ENCODE measurements at regions of chr6 and their contacts with region 1.

Region 1: DNA sequence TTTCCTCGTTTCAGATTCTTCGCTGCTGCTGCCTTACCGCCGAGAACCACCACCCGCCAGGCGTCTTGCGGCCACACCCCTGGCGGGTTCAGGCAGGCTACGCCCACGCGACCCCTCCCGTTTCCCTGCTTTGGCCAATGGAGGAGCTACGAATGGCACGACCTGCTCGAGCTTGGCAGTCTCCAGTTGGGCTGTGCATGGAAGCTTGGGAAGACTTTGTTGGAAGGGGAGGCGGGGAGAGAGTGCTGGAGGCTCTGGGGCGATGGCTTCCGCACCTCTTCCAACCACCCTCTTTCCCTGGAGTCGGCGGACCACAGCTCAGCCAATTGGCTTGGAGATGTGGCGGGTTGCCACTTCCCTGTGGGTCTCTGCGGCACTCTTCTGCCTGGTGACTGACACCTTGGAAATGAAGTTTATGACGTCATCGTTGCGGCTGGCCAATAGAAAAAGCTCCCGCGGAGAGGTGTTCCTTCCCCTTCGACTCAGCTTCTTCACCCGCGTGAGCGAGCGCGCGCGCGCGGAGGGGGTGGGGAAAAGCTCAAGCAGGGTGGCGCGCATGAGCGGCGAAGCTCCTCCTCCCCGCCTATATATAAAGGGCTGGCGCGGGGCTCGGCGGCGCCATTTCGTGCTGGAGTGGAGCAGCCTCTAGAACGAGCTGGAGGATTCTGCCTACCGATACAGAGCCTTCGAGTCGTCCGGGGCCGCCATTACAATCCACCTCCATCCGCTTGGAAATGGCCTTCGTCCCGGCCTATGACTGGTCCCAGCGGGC is 3.4 kb downstream of the BRD2 start:
- DNase-seq: peak; percentile 100
- ATAC-seq: peak; percentile 43
- H3K4me3 Mint-ChIP-seq: peak overlapping the region; percentile 98
- H3K27ac Mint-ChIP-seq: peak overlapping the region; percentile 100
- H3K4me1 Mint-ChIP-seq: peaks cover 27% of the 10 kb centered on the region
- H3K27me3 Mint-ChIP-seq: no peaks in the 10 kb centered on the region

Region 2: DNA sequence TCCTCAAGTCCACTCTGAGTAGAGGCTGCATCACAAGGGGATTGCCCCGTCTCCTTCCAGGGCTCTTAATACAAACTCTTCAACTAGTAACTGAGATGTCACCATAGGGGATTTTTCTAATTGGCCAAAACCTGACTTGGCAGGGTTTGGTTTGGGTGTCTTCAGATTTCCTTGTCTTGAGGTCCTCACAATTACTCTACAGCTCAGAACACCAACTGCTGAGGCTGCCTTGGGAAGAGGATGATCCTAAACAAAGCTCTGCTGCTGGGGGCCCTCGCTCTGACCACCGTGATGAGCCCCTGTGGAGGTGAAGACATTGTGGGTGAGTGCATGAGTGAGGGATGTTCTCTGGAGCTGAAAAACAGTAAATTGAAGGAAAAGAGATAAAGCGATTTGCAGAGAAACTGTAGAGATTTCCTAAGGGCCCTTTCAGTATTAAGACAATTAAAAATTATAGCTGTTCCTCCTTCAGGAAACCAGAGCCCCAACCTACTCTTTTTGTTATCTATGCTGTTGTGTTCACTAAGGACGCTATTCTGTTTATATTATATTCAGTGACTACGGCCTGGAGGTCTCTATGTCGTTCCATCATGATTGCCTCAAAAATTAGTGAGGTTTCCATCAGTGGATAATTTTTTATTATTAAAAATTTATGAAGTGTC is 334.4 kb before region 1 on chr6 and contains the start of gene HLA-DQA1:
- CTCF ChIA-PET with region 1: no interaction called
- POLR2A ChIA-PET with region 1: no interaction called
- intact Hi-C with region 1: no loop called
- DNase-seq: no peak
- ATAC-seq: no peak
- H3K4me3 Mint-ChIP-seq: no peak within 1 kb of the TSS
- H3K27ac Mint-ChIP-seq: no peak within 1 kb of the TSS
- H3K4me1 Mint-ChIP-seq: peaks cover 6% of the 10 kb centered on the region
- H3K27me3 Mint-ChIP-seq: peaks cover 2% of the 10 kb centered on the region
- total RNA-seq, gene HLA-DQA1: 0.32 to 0.61 TPM

Region 3: DNA sequence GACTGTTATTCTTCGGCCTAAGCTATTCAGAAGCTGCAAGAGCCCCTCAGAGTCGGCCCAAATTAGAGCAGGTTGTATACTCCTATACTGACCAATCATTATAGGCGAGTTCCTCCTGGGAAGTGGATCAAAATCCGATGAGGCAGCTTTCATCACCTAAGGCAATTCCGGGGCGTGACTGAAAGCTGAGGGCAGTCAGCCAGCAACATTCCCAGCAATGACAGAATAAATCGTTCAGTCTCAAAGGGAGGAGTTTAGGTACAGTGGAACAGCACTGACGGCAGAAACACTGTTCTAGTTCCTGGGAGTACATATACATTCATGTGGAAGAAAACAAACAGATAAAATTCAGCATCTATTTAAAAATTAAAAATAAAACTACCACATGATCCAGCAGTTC is 219.2 kb before region 1 on chr6:
- CTCF ChIA-PET with region 1: no interaction called
- POLR2A ChIA-PET with region 1: no interaction called
- intact Hi-C with region 1: no loop called
- DNase-seq: no peak
- ATAC-seq: no peak
- H3K4me3 Mint-ChIP-seq: no peak overlapping the region
- H3K27ac Mint-ChIP-seq: no peak overlapping the region
- H3K4me1 Mint-ChIP-seq: no peaks in the 10 kb centered on the region
- H3K27me3 Mint-ChIP-seq: peaks cover 27% of the 10 kb centered on the region

Region 4: DNA sequence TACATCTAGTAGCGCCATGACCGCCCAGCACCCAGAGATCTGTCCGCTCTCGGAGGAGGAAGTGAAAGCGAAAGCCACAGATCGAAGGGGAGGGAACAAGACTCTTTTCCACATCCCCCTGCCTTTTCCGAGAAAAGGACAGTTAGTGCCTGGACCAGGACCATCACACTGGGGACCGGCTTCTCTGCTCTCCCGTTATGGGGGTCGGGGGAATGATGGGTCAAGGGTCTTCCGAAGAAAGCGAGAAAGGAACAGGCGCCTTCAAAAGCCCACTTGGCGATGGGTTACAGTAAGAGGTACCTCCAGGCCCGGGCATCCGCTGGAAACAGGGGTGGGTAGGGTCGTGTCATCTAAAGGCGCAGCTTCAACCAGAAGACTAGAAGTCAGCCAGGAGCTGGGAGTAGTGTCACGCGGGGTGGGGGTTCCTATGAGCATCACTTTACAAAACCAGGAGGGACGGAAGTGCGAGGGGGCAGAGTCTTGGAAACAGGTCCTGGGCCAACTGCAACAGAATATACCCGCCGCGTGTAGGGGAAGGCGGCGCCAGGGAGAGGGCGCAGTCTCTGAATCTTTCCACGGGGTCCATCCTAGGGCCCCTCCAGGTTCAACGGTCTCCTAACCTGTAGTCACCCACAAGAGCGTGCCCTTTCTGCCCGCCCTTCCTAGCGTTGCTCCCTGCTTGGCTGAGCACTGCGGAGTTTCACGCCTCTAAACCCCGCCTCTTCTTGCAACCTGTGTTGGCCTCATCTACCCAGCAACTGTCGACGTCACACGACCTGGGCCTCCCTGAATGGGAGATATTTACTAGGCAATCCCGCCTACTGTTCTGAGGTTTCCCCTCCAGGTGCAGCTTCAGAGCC is 127.6 kb before region 1 on chr6 and contains the start of gene PSMB8:
- CTCF ChIA-PET with region 1: interaction called, 16 read pairs
- POLR2A ChIA-PET with region 1: interaction called, 69 read pairs
- intact Hi-C with region 1: loop called (anchors 1 to 2 kb)
- DNase-seq: peak; percentile 99
- ATAC-seq: peak; percentile 73
- H3K4me3 Mint-ChIP-seq: peak within 1 kb of the TSS; percentile 95
- H3K27ac Mint-ChIP-seq: peak within 1 kb of the TSS; percentile 97
- H3K4me1 Mint-ChIP-seq: peaks cover 66% of the 10 kb centered on the region
- H3K27me3 Mint-ChIP-seq: no peaks in the 10 kb centered on the region
- total RNA-seq, gene PSMB8: 238 to 338 TPM

Region 5: GRCh38 chr6:32933636-32934085 is 38.1 kb before region 1 on chr6:
- CTCF ChIA-PET with region 1: interaction called, 31 read pairs
- POLR2A ChIA-PET with region 1: interaction called, 19 read pairs
- intact Hi-C with region 1: loop called (anchors 5 kb)
- DNase-seq: peak; percentile 85
- ATAC-seq: peak; percentile 69
- H3K4me3 Mint-ChIP-seq: no peak overlapping the region
- H3K27ac Mint-ChIP-seq: no peak overlapping the region
- H3K4me1 Mint-ChIP-seq: peaks cover 5% of the 10 kb centered on the region
- H3K27me3 Mint-ChIP-seq: no peaks in the 10 kb centered on the region

Region 6: GRCh38 chr6:32984605-32985389 is 13.0 kb after region 1 on chr6:
- CTCF ChIA-PET with region 1: interaction called, 172 read pairs
- POLR2A ChIA-PET with region 1: interaction called, 71 read pairs
- intact Hi-C with region 1: no loop called
- DNase-seq: peak; percentile 96
- ATAC-seq: peak; percentile 88
- H3K4me3 Mint-ChIP-seq: no peak overlapping the region
- H3K27ac Mint-ChIP-seq: peak overlapping the region; percentile 44
- H3K4me1 Mint-ChIP-seq: peaks cover 15% of the 10 kb centered on the region
- H3K27me3 Mint-ChIP-seq: no peaks in the 10 kb centered on the region

Region 7: GRCh38 chr6:33144373-33144772 is 172.6 kb after region 1 on chr6:
- CTCF ChIA-PET with region 1: no interaction called
- POLR2A ChIA-PET with region 1: no interaction called
- intact Hi-C with region 1: no loop called
- DNase-seq: no peak
- ATAC-seq: no peak
- H3K4me3 Mint-ChIP-seq: no peak overlapping the region
- H3K27ac Mint-ChIP-seq: no peak overlapping the region
- H3K4me1 Mint-ChIP-seq: no peaks in the 10 kb centered on the region
- H3K27me3 Mint-ChIP-seq: peaks cover 26% of the 10 kb centered on the region

Region 8: GRCh38 chr6:33317669-33318425 is 346.1 kb after region 1 on chr6 and contains the start of gene ZBTB22:
- CTCF ChIA-PET with region 1: no interaction called
- POLR2A ChIA-PET with region 1: interaction called, 5 read pairs
- intact Hi-C with region 1: loop called in 1 of 2 experiments (anchors 2 kb)
- DNase-seq: peak; percentile 98
- ATAC-seq: peak; percentile 69
- H3K4me3 Mint-ChIP-seq: peak within 1 kb of the TSS; percentile 80
- H3K27ac Mint-ChIP-seq: peak within 1 kb of the TSS; percentile 93
- H3K4me1 Mint-ChIP-seq: peaks cover 70% of the 10 kb centered on the region
- H3K27me3 Mint-ChIP-seq: no peaks in the 10 kb centered on the region
- total RNA-seq, gene ZBTB22: 9.0 to 9.9 TPM

Region 9: GRCh38 chr6:33570806-33571636 is 599.3 kb after region 1 on chr6:
- CTCF ChIA-PET with region 1: no interaction called
- POLR2A ChIA-PET with region 1: no interaction called
- intact Hi-C with region 1: loop called in 1 of 2 experiments (anchors 2 kb)
- DNase-seq: peak; percentile 98
- ATAC-seq: peak; percentile 90
- H3K4me3 Mint-ChIP-seq: peak overlapping the region; percentile 81
- H3K27ac Mint-ChIP-seq: peak overlapping the region; percentile 100
- H3K4me1 Mint-ChIP-seq: peaks cover 42% of the 10 kb centered on the region
- H3K27me3 Mint-ChIP-seq: no peaks in the 10 kb centered on the region